Activated naive CD4-positive, alpha-beta T cell treated with anti-CD3 and anti-CD28 coated beads, Interleukin-2, amount 10 ng/mL, durations not matched to agents 7 days and 5 days (primary cell): ENCODE measurements at regions of chr1 and their contacts with region 1.

Region 1: GRCh38 chr1:179194068-179194537 is 35.4 kb downstream of the ABL2 start:
- DNase-seq: no peak
- H3K4me3 Mint-ChIP-seq: no peak overlapping the region
- H3K27ac Mint-ChIP-seq: no peak overlapping the region
- H3K4me1 Mint-ChIP-seq: peaks cover 23% of the 10 kb centered on the region
- H3K27me3 Mint-ChIP-seq: no peaks in the 10 kb centered on the region

Region 2: GRCh38 chr1:179121159-179121938 is 72.8 kb before region 1 on chr1:
- CTCF ChIA-PET with region 1: interaction called, 13 read pairs
- DNase-seq: peak; percentile 60
- H3K4me3 Mint-ChIP-seq: no peak overlapping the region
- H3K27ac Mint-ChIP-seq: no peak overlapping the region
- H3K4me1 Mint-ChIP-seq: peaks cover 3% of the 10 kb centered on the region
- H3K27me3 Mint-ChIP-seq: no peaks in the 10 kb centered on the region

Region 3: DNA sequence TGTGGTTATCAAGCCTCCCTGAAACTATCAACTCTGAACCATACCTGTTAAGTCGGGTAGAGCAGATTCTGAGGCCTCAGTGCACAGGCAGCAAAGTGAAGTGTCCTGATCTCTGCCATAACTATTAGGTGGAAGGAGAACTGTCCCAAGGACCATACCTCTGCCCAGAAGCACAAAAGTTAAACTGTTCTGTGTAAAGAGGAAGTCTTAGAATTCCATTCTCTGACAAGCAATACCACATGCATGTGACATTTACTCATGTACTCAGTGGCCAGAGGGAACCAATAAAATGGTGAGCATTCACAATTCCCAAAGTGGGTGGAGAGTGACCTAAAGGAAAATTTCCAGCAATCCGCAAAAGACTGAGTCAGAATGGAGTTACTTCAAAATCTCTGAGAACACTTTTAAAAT is 51.2 kb before region 1 on chr1:
- CTCF ChIA-PET with region 1: no interaction called
- DNase-seq: no peak
- H3K4me3 Mint-ChIP-seq: no peak overlapping the region
- H3K27ac Mint-ChIP-seq: peak overlapping the region; percentile 7
- H3K4me1 Mint-ChIP-seq: peaks cover 39% of the 10 kb centered on the region
- H3K27me3 Mint-ChIP-seq: no peaks in the 10 kb centered on the region

Region 4: GRCh38 chr1:179206812-179207211 is 12.7 kb after region 1 on chr1:
- CTCF ChIA-PET with region 1: no interaction called
- DNase-seq: no peak
- H3K4me3 Mint-ChIP-seq: no peak overlapping the region
- H3K27ac Mint-ChIP-seq: no peak overlapping the region
- H3K4me1 Mint-ChIP-seq: no peaks in the 10 kb centered on the region
- H3K27me3 Mint-ChIP-seq: no peaks in the 10 kb centered on the region